ENCODE measurements at regions of chr11 and their contacts with region 1.

Region 1: DNA sequence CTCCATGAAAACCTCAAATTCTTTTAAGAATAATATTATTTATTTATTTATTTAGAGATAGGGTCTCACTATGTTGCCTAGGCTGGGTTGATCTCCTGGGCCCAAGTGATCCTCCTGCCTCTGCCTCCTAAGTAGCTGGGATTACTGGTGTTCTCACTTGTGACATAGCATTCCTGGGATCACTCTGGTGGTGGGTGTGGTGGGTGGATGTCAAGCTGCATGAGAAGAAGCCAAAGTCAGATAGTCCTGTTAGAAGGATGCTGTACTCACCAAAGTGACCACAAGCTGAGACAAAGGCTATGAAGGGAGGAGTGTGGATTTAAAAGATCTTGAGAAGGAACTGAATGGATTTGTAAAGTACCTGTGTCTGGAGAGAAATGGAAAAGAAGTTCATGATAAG is 87.9 kb upstream of the SPON1 start:
- DNase-seq: no peak
- ATAC-seq: no peak
- H3K4me3 ChIP-seq: no peak overlapping the region
- H3K27ac ChIP-seq: no peak overlapping the region
- H3K4me1 ChIP-seq: peaks cover 14 to 28% of the 10 kb centered on the region in 2 experiments; a peak in 3 of 4 replicates
- H3K27me3 ChIP-seq: no peaks in the 10 kb centered on the region
- CTCF ChIP-seq: no peak
- POLR2A ChIP-seq: no peak
- RAD21 ChIP-seq: no peak

Region 2: DNA sequence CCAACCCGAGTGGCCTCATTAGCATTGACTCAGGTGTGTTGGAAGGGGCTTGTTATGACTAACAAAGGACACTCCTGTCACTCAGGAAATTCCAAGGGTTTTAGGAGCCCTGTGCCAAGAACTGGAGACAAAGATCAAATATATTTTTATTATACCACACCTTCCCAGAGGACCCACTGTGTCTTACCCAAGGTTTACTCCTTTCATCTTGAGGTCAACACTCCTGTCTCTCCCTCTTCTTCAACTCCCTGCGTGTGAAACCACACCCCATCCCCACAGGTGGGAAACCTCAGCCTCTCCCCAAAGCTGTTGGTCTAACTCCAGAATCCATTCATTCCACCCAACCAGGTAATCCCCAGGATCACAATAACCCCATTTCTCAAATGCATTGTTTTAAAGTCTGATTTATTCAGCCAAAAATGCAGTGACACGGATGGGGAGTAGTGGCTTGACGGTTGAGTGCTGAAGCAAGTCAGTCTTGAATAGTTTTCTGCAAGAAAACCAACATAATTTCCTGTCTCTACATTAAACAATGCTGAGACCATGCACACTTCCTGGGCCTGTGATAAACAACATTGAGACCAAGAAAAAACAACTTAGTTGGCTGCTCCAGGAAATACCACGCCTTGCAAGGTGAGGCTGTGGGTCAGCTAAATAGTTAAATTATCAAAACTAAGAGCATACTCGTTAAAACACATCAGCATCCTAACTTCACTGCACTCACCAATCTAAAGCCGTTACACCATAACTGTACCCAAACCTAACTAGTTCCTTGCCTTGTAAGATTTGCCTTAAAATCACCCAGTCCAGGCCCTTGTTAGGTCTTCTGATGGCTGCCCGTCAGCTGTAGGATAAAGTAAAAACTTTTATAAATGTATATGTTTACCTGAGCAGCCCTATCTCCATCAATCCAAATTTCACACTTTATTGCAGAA is 49.4 kb after region 1 on chr11:
- CTCF ChIA-PET with region 1: no interaction called
- POLR2A ChIA-PET with region 1: no interaction called
- RAD21 ChIA-PET with region 1: no interaction called
- intact Hi-C with region 1: loop called (anchors 5 kb)
- DNase-seq: peak; percentile 66
- ATAC-seq: peak; percentile 82
- H3K4me3 ChIP-seq: peak overlapping the region in 1 of 2 experiments; percentile 27; a peak in 1 of 4 replicates
- H3K27ac ChIP-seq: no peak overlapping the region
- H3K4me1 ChIP-seq: peaks cover 14 to 36% of the 10 kb centered on the region in 2 experiments
- H3K27me3 ChIP-seq: no peaks in the 10 kb centered on the region
- CTCF ChIP-seq: no peak
- POLR2A ChIP-seq: no peak
- RAD21 ChIP-seq: peak; percentile 13; the same call in 1 of the 2 replicates

Measured in HCT116 (cell line).